ENCODE measurements at regions of chr16 and their contacts with region 1.

Region 1: GRCh38 chr16:30977502-30977901 is 7.5 kb upstream of the HSD3B7 start:
- DNase-seq: peak in 1 of 2 experiments; percentile 86
- H3K4me3 ChIP-seq: no peak overlapping the region
- H3K27ac ChIP-seq: no peak overlapping the region
- H3K4me1 ChIP-seq: no peaks in the 10 kb centered on the region
- H3K27me3 ChIP-seq: no peaks in the 10 kb centered on the region
- CTCF ChIP-seq: peak; percentile 77 to 96 (median 89)
- EP300 ChIP-seq: no peak
- POLR2A ChIP-seq: no peak
- RAD21 ChIP-seq: peak; percentile 62 to 64

Region 2: DNA sequence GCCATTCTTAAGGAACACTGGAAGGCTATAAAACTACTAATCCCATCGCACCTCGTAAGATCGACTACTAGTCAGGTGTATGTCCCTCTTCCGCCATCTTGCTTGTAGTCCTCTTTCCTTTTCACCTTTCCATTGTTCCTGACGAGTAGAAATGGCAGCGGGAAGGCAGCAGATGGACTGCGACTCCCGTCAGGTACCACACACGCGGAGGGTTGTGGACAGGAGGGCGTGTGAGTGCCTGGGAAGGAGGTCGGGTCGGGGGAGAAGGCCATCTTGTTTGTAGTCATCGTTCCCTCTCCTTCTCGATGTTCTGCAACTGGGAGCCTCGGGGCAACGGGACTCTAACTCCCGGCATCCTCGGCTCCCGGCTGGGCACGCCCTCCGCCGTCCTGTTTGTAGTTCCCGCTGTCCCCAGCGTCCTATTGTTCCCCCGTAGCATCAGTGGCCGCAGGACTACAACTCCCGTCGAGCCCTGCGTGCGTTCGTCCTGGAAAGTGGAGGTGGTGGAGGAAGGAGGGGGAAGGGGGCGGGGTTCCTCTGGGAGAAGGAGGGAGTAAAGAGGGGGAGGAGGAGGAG is 54.5 kb before region 1 on chr16:
- CTCF ChIA-PET with region 1: no interaction called
- POLR2A ChIA-PET with region 1: no interaction called
- DNase-seq: peak; percentile 92 to 99
- H3K4me3 ChIP-seq: peak overlapping the region; percentile 57 to 88 (median 84)
- H3K27ac ChIP-seq: peak overlapping the region; percentile 98
- H3K4me1 ChIP-seq: peaks cover 0 to 9% (median 2%) of the 10 kb centered on the region in 4 experiments; a peak in 4 of 7 replicates
- H3K27me3 ChIP-seq: no peaks in the 10 kb centered on the region
- CTCF ChIP-seq: no peak
- EP300 ChIP-seq: no peak
- POLR2A ChIP-seq: peak; percentile 43 to 78
- RAD21 ChIP-seq: no peak

Region 3: DNA sequence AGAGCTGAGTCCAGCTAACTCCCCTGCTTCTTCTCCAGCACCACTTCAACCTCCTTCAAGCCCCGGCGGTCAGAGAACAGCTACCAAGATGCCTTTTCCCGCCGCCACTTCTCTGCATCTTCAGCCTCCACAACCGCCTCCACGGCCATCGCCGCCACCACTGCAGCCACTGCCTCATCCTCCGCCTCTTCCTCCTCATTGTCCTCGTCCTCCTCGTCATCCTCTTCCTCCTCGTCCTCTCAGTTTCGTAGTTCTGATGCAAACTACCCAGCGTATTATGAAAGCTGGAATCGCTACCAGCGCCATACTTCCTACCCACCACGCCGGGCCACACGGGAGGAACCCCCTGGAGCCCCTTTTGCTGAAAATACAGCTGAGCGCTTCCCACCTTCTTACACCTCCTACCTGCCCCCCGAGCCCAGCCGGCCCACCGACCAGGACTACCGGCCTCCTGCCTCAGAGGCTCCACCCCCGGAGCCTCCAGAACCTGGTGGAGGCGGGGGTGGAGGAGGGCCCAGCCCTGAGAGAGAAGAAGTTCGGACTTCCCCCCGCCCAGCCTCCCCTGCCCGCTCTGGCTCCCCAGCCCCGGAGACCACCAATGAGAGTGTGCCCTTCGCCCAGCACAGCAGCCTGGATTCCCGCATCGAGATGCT is 12.8 kb before region 1 on chr16:
- CTCF ChIA-PET with region 1: interaction called, 26 read pairs
- POLR2A ChIA-PET with region 1: interaction called, 45 read pairs
- DNase-seq: no peak
- H3K4me3 ChIP-seq: no peak overlapping the region
- H3K27ac ChIP-seq: no peak overlapping the region
- H3K4me1 ChIP-seq: no peaks in the 10 kb centered on the region
- H3K27me3 ChIP-seq: no peaks in the 10 kb centered on the region
- CTCF ChIP-seq: no peak
- EP300 ChIP-seq: no peak
- POLR2A ChIP-seq: no peak
- RAD21 ChIP-seq: no peak